Activated naive CD4-positive, alpha-beta T cell treated with anti-CD3 and anti-CD28 coated beads for 36 hours (primary cell): ENCODE measurements at regions of chr5 and their contacts with region 1.

Region 1: DNA sequence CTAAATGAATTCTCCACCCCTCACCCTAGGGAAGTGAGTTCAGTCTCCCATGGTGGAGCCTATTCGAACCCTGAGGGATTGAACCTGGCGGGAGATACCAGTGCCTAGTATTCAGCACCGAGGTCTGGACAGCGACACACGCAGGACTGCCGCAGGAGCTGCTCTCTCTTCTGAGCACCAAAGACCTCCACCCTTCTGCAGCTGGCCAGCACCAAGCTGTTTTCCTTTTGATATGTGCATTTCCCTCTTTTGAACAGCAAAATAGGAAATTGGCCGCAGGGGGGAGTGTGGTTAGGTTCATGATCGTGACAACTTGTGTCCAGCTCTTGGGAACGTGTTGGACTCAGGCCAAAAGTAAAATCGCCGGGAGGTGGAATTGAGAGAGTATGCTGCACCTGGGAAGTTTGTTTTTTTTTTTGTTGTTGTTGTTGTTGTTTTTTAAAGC is 1.2 kb upstream of the PCSK1 start:
- DNase-seq: peak; percentile 78
- H3K4me3 Mint-ChIP-seq: no peak overlapping the region
- H3K27ac Mint-ChIP-seq: no peak overlapping the region
- H3K4me1 Mint-ChIP-seq: peaks cover 14% of the 10 kb centered on the region
- H3K27me3 Mint-ChIP-seq: peaks cover 70% of the 10 kb centered on the region

Region 2: DNA sequence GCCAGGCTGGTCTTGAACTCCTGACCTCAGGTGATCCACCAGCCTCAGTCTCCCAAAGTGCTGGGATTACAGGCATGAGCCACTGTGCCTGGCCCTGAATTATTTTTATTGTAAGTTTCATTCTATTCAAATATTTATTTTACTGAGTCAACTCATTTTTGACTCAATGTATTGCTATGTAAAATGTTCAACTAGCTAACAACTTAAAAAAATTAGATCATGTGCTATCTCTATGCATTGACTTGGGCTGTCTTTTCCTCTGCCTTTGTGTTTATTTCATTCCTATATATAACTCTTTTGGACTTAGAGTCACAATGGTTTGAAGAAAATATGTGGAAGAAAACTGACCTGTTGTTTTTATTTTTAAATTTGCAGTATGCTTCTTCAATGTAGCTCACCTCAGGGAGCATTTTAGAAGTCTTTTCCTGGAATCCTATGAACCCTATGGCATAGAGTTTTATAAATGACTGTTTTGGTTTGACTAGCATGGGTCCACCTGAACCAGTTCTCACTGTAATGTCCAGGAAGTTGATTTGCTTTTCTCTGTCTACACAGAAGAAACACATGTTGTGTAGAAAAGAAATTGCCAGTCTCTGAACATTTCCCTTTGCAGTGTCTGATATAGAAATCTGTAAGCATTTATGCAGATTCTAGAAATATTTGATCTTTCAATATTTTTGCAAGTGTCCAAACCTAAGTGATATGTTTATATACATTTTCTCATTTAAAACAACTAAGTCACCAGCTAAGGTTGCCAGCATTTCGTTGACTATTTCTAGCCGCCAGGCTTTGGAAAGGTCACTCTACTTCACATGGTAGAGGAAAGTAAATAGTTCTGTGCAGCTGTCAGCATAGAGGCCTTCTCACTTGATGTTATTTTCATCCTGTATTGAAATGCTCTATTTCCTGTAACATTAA is 140.0 kb before region 1 on chr5:
- CTCF ChIA-PET with region 1: no interaction called
- intact Hi-C with region 1: no loop called
- DNase-seq: no peak
- H3K4me3 Mint-ChIP-seq: no peak overlapping the region
- H3K27ac Mint-ChIP-seq: no peak overlapping the region
- H3K4me1 Mint-ChIP-seq: peaks cover 3% of the 10 kb centered on the region
- H3K27me3 Mint-ChIP-seq: peaks cover 17% of the 10 kb centered on the region

Region 3: GRCh38 chr5:96483878-96484277 is 49.7 kb after region 1 on chr5:
- CTCF ChIA-PET with region 1: no interaction called
- intact Hi-C with region 1: loop called (anchors 5 kb)
- DNase-seq: peak; percentile 27
- H3K4me3 Mint-ChIP-seq: no peak overlapping the region
- H3K27ac Mint-ChIP-seq: no peak overlapping the region
- H3K4me1 Mint-ChIP-seq: no peaks in the 10 kb centered on the region
- H3K27me3 Mint-ChIP-seq: peaks cover 8% of the 10 kb centered on the region